HEK293 (cell line): ENCODE measurements at regions of chr1 and their contacts with region 1.

Region 1: DNA sequence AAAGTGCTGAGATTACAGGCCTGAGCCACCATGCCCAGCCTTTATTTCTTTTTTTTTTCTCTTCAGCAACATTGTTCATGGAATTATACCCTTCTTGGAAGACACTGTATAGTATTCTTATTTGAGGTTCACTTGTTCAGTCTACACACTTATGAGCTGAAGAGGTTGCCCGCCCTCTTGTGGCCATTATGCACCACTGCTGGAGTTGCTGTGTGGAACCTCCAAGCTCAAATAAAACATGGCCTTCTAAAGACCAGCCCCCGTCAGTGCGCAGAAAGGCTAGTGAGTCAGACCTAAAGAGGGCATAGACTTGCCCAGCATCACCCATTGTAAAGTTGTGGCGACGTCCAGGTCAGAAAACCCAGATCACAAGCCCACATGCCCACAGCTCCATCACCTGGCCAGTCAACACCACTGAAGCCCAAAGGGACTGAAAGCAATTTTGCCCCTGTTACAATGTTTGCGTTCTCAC is 20.4 kb downstream of the LURAP1 start:
- H3K4me3 ChIP-seq: no peak overlapping the region
- H3K27ac ChIP-seq: no peak overlapping the region
- H3K4me1 ChIP-seq: no peaks in the 10 kb centered on the region
- CTCF ChIP-seq: peak; percentile 93

Region 2: DNA sequence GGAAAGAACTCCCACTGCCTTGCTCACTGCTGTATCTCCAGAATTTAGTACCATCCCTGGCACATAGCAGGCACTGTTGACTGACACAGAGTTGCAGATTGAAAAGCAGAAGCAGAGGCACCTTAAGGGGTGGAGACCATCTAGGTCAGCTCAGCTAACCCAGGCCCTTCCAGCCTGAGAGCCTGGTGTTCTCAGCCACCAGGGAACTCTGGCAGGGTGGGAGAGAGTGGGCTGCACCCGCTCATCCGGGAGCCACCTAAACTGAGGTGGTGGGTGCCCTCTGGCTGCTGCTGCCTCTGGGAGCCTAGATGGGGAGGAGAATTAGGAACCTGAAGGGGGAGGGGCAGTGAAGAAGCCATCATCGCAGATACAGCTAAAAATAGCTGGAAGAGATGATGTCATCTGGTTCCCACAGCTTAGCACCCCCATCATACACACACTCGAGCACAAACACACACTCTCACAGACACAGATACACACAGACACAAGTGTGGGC is 50.1 kb before region 1 on chr1:
- CTCF ChIA-PET with region 1: interaction called, 12 read pairs
- POLR2A ChIA-PET with region 1: no interaction called
- H3K4me3 ChIP-seq: no peak overlapping the region
- H3K27ac ChIP-seq: no peak overlapping the region
- H3K4me1 ChIP-seq: no peaks in the 10 kb centered on the region; the same call in 1 of the 2 replicates
- CTCF ChIP-seq: peak; percentile 57; the same call in 1 of the 2 replicates

Region 3: DNA sequence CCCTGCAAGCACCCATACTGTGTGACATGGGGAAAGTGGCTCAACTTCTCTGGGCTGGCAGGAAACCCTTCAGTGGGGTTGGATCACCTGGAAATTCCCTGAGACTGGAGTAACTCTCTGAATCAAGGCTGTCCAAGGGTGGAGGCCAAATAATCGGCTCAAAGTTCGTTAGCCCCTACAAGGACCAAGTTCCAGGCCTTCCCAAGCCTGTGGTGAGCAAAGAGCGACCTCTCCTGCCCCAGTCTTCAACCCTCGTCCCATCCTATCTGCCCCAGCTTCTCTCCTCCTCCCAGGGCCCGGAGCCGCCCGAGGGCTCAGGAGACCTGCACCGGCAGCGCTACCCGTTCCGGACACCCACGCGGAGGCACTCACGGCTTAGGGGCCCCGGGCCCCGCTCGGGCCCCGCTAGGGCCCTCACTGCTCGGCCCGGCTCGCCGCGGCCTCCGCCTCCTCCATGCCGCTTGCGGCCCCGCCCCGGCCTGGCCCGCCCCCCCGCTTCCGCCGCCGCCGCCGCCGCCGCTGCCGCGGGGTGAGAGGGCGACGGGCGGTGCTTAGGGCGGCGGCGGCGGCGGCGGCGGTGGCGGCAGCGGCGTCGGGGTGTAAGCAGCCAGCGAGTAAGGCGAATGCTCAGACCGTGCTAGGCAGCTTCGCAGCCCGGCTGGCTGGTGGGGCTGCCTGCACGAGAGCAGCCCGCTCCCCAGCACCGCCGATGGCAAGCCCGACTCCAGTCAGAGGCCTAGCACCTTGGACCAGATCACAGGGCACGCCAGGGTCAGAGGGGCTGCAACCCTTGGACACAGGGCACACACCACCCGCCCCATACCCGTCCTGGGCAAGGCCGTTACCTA is 25.3 kb before region 1 on chr1 and contains the start of gene POMGNT1:
- CTCF ChIA-PET with region 1: interaction called, 49 read pairs
- POLR2A ChIA-PET with region 1: interaction called, 3 read pairs
- H3K4me3 ChIP-seq: peak within 1 kb of the TSS; percentile 75
- H3K27ac ChIP-seq: peak within 1 kb of the TSS; percentile 81
- H3K4me1 ChIP-seq: no peaks in the 10 kb centered on the region
- CTCF ChIP-seq: peak; percentile 69

Region 4: DNA sequence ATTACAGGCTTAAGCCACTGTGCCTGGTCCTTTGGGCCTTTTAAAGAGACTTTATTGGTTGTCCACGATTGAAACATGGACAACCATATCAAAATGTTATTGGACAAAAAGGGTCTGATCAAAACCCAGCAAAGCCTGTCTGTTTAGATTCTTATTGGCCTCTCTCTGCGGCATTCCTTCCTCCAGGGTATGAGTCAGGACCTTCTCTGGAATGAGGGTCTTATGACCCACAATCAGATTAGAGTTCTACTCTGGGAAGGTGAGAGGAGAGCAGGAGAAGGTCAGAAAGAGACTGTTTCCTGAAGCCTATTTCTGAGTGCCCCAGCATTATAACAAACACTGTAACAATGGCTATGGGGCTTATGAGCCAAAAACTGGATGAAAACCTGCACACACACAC is 12.5 kb before region 1 on chr1:
- CTCF ChIA-PET with region 1: interaction called, 49 read pairs
- POLR2A ChIA-PET with region 1: no interaction called
- H3K4me3 ChIP-seq: no peak overlapping the region
- H3K27ac ChIP-seq: no peak overlapping the region
- H3K4me1 ChIP-seq: no peaks in the 10 kb centered on the region
- CTCF ChIP-seq: no peak

Region 5: GRCh38 chr1:46247436-46248121 is 24.1 kb after region 1 on chr1 and contains the start of gene RAD54L:
- CTCF ChIA-PET with region 1: interaction called, 23 read pairs
- POLR2A ChIA-PET with region 1: interaction called, 8 read pairs
- H3K4me3 ChIP-seq: peak within 1 kb of the TSS; percentile 83
- H3K27ac ChIP-seq: peak within 1 kb of the TSS; percentile 59
- H3K4me1 ChIP-seq: peaks cover 4% of the 10 kb centered on the region; the same call in 1 of the 2 replicates
- CTCF ChIP-seq: no peak